Colonic mucosa (tissue), 4 donors: ENCODE measurements at regions of chrX and their contacts with region 1.

Region 1: GRCh38 chrX:84046403-84046984 is 141.5 kb downstream of the RPS6KA6 start:
- DNase-seq: no peak
- H3K4me3 ChIP-seq: no peak overlapping the region
- H3K27ac ChIP-seq: no peak overlapping the region
- H3K4me1 ChIP-seq: no peaks in the 10 kb centered on the region
- H3K27me3 ChIP-seq: peaks cover 3% of the 10 kb centered on the region
- CTCF ChIP-seq: peak; percentile 71

Region 2: DNA sequence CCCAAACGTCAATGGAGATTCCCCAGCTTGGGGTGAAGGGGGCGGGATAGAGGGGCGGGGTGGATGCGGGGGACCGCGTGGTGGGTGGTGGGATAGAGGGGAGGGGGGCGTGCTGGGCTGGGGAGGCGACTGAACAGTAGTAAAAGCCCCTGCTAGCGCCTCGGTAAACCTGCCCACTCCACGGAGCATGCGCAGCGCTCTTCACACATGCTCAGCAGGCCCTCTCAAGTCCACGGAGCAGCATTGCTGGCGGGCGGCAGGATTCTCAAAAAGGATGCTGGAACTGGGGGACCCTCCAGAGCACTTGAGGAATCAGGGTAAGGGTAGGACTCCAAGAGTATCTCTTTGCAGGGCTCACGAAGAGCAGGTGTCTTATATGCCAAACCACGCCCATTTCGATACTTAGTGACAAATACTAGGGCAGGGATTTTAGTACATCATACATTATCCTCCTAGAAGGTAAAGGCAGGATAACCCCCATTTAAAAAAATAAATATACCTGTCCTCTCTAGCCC is 141.9 kb after region 1 on chrX:
- intact Hi-C with region 1: loop called (anchors 10 kb)
- DNase-seq: peak; percentile 53
- H3K4me3 ChIP-seq: peak overlapping the region; percentile 51
- H3K27ac ChIP-seq: no peak overlapping the region
- H3K4me1 ChIP-seq: no peaks in the 10 kb centered on the region
- H3K27me3 ChIP-seq: no peaks in the 10 kb centered on the region
- CTCF ChIP-seq: no peak